ENCODE measurements at regions of chr5 and their contacts with region 1.

Region 1: GRCh38 chr5:179166886-179167841 is 107.0 kb downstream of the ZNF354C start:
- DNase-seq: peak; percentile 85
- ATAC-seq: peak; percentile 95
- H3K4me3 Mint-ChIP-seq: no peak overlapping the region
- H3K27ac Mint-ChIP-seq: no peak overlapping the region
- H3K4me1 Mint-ChIP-seq: no peaks in the 10 kb centered on the region
- H3K27me3 Mint-ChIP-seq: peaks cover 4% of the 10 kb centered on the region

Region 2: GRCh38 chr5:178739452-178740193 is 427.5 kb before region 1 on chr5:
- CTCF ChIA-PET with region 1: no interaction called
- POLR2A ChIA-PET with region 1: no interaction called
- intact Hi-C with region 1: no loop called
- DNase-seq: no peak
- ATAC-seq: no peak
- H3K4me3 Mint-ChIP-seq: no peak overlapping the region
- H3K27ac Mint-ChIP-seq: no peak overlapping the region
- H3K4me1 Mint-ChIP-seq: no peaks in the 10 kb centered on the region
- H3K27me3 Mint-ChIP-seq: peaks cover 20% of the 10 kb centered on the region

Region 3: DNA sequence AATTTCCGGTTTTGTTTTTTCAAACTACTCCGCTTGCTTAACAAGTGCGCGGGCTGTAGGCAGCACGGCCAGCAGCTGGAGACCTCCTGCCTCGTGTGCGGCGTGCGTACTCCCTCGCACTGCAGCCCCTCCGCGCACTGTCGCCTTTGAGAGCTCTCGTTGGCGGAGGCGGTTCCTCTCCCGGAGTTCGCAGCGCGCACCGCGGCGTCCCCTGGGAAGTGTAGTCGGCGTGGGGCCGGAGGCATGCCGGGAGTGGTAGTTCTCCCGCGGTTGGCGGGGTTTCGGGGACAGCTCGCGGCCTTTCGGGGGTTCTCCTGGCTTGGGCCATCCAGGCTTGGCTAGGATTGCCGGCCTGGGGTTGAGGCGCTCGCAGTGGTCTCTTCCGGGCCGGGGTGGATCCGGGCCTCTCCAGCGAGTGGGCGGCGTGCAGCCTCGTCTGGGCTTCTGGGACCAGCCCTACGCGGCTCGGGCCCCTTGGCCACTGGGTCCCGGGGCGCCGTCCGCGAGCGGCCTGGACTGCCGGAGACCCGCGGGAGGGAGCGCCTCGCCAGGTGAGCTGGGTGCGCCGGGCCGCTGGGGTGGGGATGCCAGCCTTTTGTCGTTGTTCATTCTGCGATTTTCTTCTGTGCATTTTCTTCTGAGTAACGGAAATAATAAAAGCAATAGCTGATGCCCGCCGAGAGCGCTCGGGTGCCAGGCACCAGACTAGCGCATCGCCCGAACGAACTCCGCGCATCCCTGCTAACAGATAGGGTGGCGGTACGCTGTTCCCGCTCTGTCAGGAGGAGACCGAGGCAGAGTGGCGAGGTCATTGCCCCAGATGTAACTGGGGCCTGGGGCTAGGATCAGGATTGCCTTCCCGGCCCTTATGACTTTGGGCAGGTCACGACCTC is 106.8 kb before region 1 on chr5 and contains the start of gene ZNF354C:
- CTCF ChIA-PET with region 1: interaction called, 4 read pairs
- POLR2A ChIA-PET with region 1: no interaction called
- intact Hi-C with region 1: loop called in 1 of 2 experiments (anchors 1 kb)
- DNase-seq: peak; percentile 93
- ATAC-seq: peak; percentile 99
- H3K4me3 Mint-ChIP-seq: peak within 1 kb of the TSS; percentile 81
- H3K27ac Mint-ChIP-seq: peak within 1 kb of the TSS; percentile 90
- H3K4me1 Mint-ChIP-seq: peaks cover 16% of the 10 kb centered on the region
- H3K27me3 Mint-ChIP-seq: no peaks in the 10 kb centered on the region
- total RNA-seq, gene ZNF354C: 7.1 to 7.2 TPM

Region 4: DNA sequence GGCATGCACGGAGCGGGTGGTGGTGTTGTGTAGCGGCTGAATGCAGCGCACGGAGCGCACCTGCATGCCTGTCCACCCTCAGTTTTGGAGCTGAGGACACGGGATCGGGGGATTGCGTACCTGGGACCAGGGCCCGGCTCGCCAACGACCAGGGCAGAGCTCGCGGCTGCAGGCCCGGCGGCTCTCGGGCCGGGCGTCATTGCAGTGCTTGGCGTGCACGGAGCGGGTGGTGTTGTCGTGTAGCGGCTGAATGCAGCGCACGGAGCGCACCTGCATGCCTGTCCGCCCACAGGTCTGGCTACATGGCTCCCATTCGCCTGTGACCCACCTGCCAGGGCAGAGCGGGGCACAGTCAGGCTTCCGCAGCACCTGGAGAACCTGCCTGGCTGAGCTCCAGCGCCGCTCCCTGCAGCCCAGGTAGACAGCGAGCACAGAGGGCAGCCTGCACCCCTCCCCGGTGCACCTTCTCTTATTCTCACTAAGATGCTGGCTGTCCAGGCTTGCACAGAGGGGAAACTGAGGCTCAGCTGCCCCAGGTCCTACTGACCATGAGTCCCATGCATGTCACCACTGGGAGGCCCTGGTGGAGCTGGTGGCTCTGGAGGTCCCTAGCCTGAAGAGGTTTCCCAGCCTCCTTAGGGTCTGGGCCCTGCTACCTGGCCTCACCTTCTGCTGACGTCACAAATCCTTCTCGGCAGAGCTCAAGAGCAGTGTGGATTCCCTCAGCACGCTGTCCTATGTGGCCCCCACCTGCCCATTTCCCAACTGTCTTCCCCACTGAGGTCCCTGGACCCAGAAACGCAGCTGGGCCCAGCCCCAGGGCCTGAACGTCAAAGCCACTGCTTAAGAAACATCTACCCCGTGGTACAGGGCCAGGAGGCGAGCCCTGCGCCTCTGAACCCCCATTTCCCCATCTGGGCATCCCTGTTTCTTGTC is 42.0 kb before region 1 on chr5:
- CTCF ChIA-PET with region 1: no interaction called
- POLR2A ChIA-PET with region 1: no interaction called
- intact Hi-C with region 1: no loop called
- DNase-seq: no peak
- ATAC-seq: no peak
- H3K4me3 Mint-ChIP-seq: no peak overlapping the region
- H3K27ac Mint-ChIP-seq: no peak overlapping the region
- H3K4me1 Mint-ChIP-seq: no peaks in the 10 kb centered on the region
- H3K27me3 Mint-ChIP-seq: no peaks in the 10 kb centered on the region

Measured in activated CD4-positive, alpha-beta T cell treated with anti-CD3 and anti-CD28 coated beads for 36 hours (primary cell).